CD8-positive, alpha-beta T cell (primary cell): ENCODE measurements at regions of chr1 and their contacts with region 1.

Region 1: GRCh38 chr1:8848663-8849386 is 29.7 kb downstream of the ENO1 start:
- DNase-seq: peak; percentile 51 to 86 (median 76)
- ATAC-seq: peak; percentile 92
- H3K4me3 ChIP-seq: no peak overlapping the region
- H3K4me3 Mint-ChIP-seq: no peak overlapping the region
- H3K27ac ChIP-seq: no peak overlapping the region
- H3K27ac Mint-ChIP-seq: no peak overlapping the region
- H3K4me1 ChIP-seq: peaks cover 3% of the 10 kb centered on the region
- H3K4me1 Mint-ChIP-seq: peaks cover 2% of the 10 kb centered on the region
- H3K27me3 ChIP-seq: no peaks in the 10 kb centered on the region
- H3K27me3 Mint-ChIP-seq: peaks cover 2% of the 10 kb centered on the region
- CTCF ChIP-seq: peak; percentile 82

Region 2: DNA sequence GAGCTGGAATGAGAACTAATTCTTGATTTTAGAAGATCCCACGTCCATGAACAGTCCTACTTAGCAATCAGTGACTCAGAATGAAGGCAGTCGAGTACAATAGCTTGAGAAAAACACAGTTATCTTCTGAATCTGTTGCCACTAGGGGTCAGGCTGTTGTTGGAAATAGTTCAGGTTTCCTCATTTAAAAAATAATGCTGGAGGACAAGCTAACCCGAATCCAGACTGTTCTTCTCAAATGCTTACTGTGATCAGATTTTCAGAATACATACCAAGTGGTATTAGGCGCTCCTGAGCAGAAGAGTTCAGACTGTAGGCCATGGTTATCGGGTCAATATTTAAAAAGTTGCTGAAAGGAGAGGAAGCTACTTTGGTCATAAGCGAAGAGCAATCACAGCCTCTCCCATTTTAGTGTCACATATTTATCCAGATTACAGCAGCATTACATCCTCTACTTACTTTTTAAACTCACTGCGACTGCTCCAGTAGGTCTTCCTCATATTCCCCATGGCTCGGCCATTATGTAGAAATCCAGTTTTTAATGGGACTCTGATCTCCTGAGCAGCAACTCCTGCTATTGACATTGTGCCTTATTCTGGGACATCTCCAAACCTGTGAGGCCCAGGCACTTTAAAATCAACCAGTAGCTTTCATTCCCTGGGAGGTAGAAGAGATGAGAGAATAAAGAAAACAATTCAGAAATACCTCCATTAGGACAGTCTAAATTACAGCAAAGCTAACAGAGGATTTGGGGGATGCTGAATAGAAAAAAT is 833.6 kb before region 1 on chr1:
- CTCF ChIA-PET with region 1: interaction called, 11 read pairs
- POLR2A ChIA-PET with region 1: no interaction called
- intact Hi-C with region 1: loop called in 1 of 2 experiments (anchors 10 kb)
- DNase-seq: peak in 5 of 9 experiments; percentile 12 to 73 (median 43)
- ATAC-seq: peak; percentile 64
- H3K4me3 ChIP-seq: no peak overlapping the region
- H3K4me3 Mint-ChIP-seq: no peak overlapping the region
- H3K27ac ChIP-seq: no peak overlapping the region
- H3K27ac Mint-ChIP-seq: no peak overlapping the region
- H3K4me1 ChIP-seq: no peaks in the 10 kb centered on the region
- H3K4me1 Mint-ChIP-seq: no peaks in the 10 kb centered on the region
- H3K27me3 ChIP-seq: no peaks in the 10 kb centered on the region
- H3K27me3 Mint-ChIP-seq: peaks cover 15% of the 10 kb centered on the region
- CTCF ChIP-seq: peak; percentile 71

Region 3: DNA sequence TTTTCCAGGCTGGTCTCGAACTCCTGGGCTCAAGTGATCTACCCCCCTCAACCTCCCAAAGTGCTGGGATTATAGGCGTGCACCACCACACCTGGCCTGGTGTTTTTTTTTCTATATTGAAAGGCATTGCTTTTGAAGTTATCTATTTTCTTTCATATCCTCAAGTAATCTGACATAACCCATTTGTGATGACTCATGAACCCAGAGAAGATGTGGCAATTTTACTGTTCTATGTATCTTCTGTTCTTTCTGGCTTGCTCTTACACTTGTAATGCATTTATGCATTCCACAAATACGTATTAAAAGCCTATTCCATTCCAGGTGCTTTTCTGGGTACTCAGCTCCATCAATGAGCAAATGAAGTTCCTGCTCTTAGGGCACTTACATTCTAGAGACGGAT is 792.9 kb before region 1 on chr1:
- CTCF ChIA-PET with region 1: no interaction called
- POLR2A ChIA-PET with region 1: no interaction called
- intact Hi-C with region 1: no loop called
- DNase-seq: no peak
- ATAC-seq: no peak
- H3K4me3 ChIP-seq: no peak overlapping the region
- H3K4me3 Mint-ChIP-seq: no peak overlapping the region
- H3K27ac ChIP-seq: no peak overlapping the region
- H3K27ac Mint-ChIP-seq: no peak overlapping the region
- H3K4me1 ChIP-seq: no peaks in the 10 kb centered on the region
- H3K4me1 Mint-ChIP-seq: no peaks in the 10 kb centered on the region
- H3K27me3 ChIP-seq: no peaks in the 10 kb centered on the region
- H3K27me3 Mint-ChIP-seq: peaks cover 5% of the 10 kb centered on the region
- CTCF ChIP-seq: no peak

Region 4: GRCh38 chr1:8560611-8561544 is 287.9 kb before region 1 on chr1:
- CTCF ChIA-PET with region 1: interaction called, 114 read pairs
- POLR2A ChIA-PET with region 1: interaction called, 9 read pairs
- intact Hi-C with region 1: loop called (anchors 1 kb)
- DNase-seq: peak in 5 of 9 experiments; percentile 28 to 70 (median 31)
- ATAC-seq: peak; percentile 94
- H3K4me3 ChIP-seq: no peak overlapping the region
- H3K4me3 Mint-ChIP-seq: no peak overlapping the region
- H3K27ac ChIP-seq: no peak overlapping the region
- H3K27ac Mint-ChIP-seq: no peak overlapping the region
- H3K4me1 ChIP-seq: no peaks in the 10 kb centered on the region
- H3K4me1 Mint-ChIP-seq: peaks cover 5% of the 10 kb centered on the region
- H3K27me3 ChIP-seq: no peaks in the 10 kb centered on the region
- H3K27me3 Mint-ChIP-seq: no peaks in the 10 kb centered on the region
- CTCF ChIP-seq: peak; percentile 99

Region 5: GRCh38 chr1:8727809-8728213 is 121.0 kb before region 1 on chr1:
- CTCF ChIA-PET with region 1: interaction called, 51 read pairs
- POLR2A ChIA-PET with region 1: no interaction called
- intact Hi-C with region 1: loop called in 1 of 2 experiments (anchors 5 kb)
- DNase-seq: no peak
- ATAC-seq: no peak
- H3K4me3 ChIP-seq: no peak overlapping the region
- H3K4me3 Mint-ChIP-seq: no peak overlapping the region
- H3K27ac ChIP-seq: no peak overlapping the region
- H3K27ac Mint-ChIP-seq: no peak overlapping the region
- H3K4me1 ChIP-seq: no peaks in the 10 kb centered on the region
- H3K4me1 Mint-ChIP-seq: peaks cover 2% of the 10 kb centered on the region
- H3K27me3 ChIP-seq: no peaks in the 10 kb centered on the region
- H3K27me3 Mint-ChIP-seq: no peaks in the 10 kb centered on the region
- CTCF ChIP-seq: no peak

Region 6: GRCh38 chr1:8817406-8818324 is 31.2 kb before region 1 on chr1 and contains the start of gene RERE:
- CTCF ChIA-PET with region 1: interaction called, 14 read pairs
- POLR2A ChIA-PET with region 1: interaction called, 7 read pairs
- intact Hi-C with region 1: no loop called
- DNase-seq: peak; percentile 91 to 99 (median 97)
- ATAC-seq: peak; percentile 96
- H3K4me3 ChIP-seq: peak within 1 kb of the TSS; percentile 84 to 98
- H3K4me3 Mint-ChIP-seq: peak within 1 kb of the TSS; percentile 92
- H3K27ac ChIP-seq: peak within 1 kb of the TSS; percentile 85 to 90
- H3K27ac Mint-ChIP-seq: peak within 1 kb of the TSS; percentile 90
- H3K4me1 ChIP-seq: peaks cover 24% of the 10 kb centered on the region
- H3K4me1 Mint-ChIP-seq: peaks cover 41% of the 10 kb centered on the region
- H3K27me3 ChIP-seq: no peaks in the 10 kb centered on the region
- H3K27me3 Mint-ChIP-seq: no peaks in the 10 kb centered on the region
- CTCF ChIP-seq: no peak
- total RNA-seq, gene RERE: 62.8 to 68.4 TPM

Region 7: GRCh38 chr1:8858888-8859706 is 10.3 kb after region 1 on chr1:
- CTCF ChIA-PET with region 1: interaction called, 93 read pairs
- POLR2A ChIA-PET with region 1: interaction called, 6 read pairs
- intact Hi-C with region 1: no loop called
- DNase-seq: peak in 7 of 9 experiments; percentile 37 to 76 (median 59)
- ATAC-seq: peak; percentile 79
- H3K4me3 ChIP-seq: no peak overlapping the region
- H3K4me3 Mint-ChIP-seq: no peak overlapping the region
- H3K27ac ChIP-seq: peak overlapping the region in 1 of 2 experiments; percentile 31
- H3K27ac Mint-ChIP-seq: peak overlapping the region; percentile 77
- H3K4me1 ChIP-seq: no peaks in the 10 kb centered on the region
- H3K4me1 Mint-ChIP-seq: peaks cover 15% of the 10 kb centered on the region
- H3K27me3 ChIP-seq: no peaks in the 10 kb centered on the region
- H3K27me3 Mint-ChIP-seq: no peaks in the 10 kb centered on the region
- CTCF ChIP-seq: peak; percentile 65

Region 8: GRCh38 chr1:10745886-10746455 is 1897.1 kb after region 1 on chr1:
- CTCF ChIA-PET with region 1: no interaction called
- POLR2A ChIA-PET with region 1: no interaction called
- intact Hi-C with region 1: no loop called
- DNase-seq: no peak
- ATAC-seq: no peak
- H3K4me3 ChIP-seq: no peak overlapping the region
- H3K4me3 Mint-ChIP-seq: no peak overlapping the region
- H3K27ac ChIP-seq: no peak overlapping the region
- H3K27ac Mint-ChIP-seq: no peak overlapping the region
- H3K4me1 ChIP-seq: no peaks in the 10 kb centered on the region
- H3K4me1 Mint-ChIP-seq: no peaks in the 10 kb centered on the region
- H3K27me3 ChIP-seq: no peaks in the 10 kb centered on the region
- H3K27me3 Mint-ChIP-seq: peaks cover 4% of the 10 kb centered on the region
- CTCF ChIP-seq: no peak